Posterior vena cava (tissue), 2 donors: ENCODE measurements at regions of chr21 and their contacts with region 1.

Region 1: DNA sequence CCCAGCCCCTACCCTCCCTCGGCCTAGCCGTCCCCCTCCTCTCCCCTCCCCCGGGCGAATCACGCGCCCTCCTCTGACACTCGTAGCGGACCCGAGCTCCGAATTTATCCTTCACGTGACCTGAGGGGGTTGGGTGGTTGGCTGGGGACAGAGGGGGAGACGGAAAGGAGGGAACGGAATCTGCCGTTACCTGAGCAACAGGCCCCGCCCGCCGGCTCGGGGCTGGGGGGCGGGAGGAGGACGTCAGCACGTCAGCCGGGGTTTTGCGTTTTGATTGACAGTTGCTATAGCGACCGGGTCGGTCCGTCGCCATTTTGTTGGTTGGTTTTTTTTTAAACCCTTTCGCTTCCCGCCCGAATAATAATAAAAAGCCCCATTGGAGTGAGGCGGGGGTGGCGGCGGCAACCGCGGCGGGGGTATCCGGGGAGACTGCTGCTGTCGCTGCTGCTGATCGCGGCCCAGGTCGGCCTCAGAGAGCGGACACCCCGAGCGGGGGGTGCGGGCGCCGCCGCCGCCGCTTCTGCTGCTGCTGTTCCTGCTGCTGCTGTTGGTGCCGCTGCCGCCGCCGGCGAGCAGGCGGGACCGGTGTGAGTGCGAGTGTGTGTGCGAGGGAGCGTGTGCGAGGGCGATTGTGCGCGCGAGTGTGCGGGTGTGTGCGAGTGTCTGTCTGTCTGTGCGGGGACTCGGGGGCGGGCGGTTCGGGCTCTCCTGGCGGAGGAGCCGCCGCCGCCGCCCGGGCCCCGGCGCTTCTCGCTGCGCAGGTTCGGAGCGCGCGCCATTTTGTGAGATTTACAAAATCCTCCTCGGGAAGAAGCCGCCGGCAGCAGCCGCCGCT is at the start of gene DYRK1A:
- DNase-seq: peak; percentile 99
- total RNA-seq, gene DYRK1A: 58.1 to 68.2 TPM

Region 2: DNA sequence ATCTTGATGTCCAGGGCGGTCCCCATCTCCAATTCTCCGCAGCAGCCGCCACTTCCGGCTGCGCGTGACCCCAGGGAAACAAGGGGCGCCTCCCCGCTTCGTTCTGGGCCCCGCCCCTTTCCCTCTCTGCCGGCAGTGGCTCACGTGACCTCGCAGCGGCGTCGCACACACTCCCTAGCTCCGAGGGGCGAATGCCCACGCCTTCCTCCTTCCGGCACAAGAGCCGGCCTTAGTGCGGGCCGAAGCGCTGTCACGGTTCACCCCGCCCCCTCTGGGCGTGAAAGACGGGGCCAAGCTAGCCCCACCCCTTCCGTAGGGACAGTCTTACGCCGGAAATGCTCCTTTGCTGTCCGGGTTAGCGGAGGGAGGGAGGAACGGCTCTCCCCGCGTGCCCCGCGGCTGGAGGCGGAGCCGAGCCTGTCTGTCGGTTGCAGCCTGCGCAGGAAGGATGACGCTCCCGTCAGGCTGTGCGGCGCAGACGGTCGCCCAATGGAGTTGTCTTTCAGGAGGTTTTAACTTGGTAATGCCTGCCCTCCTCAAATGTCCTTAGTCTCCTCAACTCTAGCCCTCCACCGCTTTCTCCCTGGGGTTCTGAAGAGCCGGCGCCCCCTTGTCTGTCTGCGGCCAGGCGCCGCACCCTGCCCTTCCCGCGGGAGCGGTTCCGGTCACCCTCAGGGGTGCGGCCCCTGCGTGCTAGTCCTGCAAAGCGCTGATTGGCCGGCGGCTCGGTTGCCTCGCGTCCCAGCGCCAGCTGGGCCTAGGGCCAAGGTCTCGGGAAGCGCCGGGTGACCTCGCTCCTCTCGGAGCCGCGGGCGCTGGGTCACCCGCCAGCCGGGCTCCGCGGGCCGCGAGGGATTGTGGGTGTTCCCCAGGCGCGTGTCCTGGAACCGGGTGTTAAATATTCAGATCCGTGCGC is 99.2 kb before region 1 on chr21 and contains the start of gene VPS26C:
- intact Hi-C with region 1: loop called (anchors 10 kb)
- DNase-seq: peak; percentile 100
- total RNA-seq, gene VPS26C: 42.0 to 44.4 TPM

Region 3: DNA sequence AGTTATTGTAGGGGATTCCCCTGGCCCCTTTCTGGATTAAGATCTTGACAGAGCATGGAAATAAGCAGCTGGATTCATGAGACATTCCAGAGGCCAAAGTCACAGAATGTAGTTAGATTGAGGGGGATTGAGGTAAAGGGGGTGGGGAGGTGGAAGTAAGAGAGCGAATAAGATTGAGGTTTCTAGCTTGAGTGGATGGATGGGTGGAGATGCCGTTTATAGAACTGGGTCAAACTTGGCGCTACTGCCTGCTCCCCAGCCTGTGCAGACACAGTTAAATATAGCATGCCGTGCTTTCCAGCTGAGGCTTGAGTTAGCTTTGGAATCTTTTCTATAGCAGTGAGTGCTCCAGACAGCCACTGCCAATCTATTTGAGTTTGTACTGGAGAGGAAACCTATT is 85.5 kb after region 1 on chr21:
- intact Hi-C with region 1: loop called in 1 of 2 experiments (anchors 10 kb)
- DNase-seq: no peak

Region 4: GRCh38 chr21:37563641-37564340 is 197.1 kb after region 1 on chr21:
- intact Hi-C with region 1: loop called in 1 of 2 experiments (anchors 10 kb)
- DNase-seq: peak; percentile 98